ENCODE measurements at regions of chr11 and their contacts with region 1.

Region 1: DNA sequence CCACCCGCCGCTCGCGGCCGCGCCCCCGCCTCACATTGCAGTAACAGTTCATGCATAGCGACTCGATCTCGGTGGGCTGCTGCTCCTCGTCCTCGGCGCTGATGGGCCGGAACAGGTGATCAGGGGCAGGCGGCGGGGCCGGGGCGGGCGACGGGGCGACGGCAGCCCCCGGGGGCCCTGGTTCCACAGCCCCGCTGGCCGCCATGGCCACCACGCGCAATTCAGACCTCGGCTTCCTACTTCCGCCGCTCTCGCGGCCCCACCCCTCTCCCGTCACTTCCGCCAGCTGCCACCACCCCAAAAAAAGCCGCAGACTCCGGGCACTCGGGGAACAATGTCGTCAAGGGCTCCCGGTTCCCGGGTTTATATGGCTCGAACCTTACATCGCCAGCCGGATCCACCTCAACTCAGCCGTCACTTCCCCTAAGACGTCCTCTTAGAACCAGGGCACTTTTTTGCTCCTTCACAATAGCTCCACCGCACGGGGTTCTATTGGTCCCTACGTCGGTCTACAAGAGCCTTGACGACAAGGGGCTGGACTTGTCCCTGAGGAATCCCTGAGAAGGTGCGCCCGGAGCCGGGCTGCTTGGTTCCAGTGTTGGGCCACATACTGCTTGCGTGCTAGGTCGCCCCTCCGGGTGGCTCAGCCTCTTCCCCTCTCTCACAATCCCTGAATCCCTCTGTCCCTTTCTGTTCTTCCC is at the start of gene ZPR1:
- DNase-seq: peak; percentile 91 to 95
- ATAC-seq: peak; percentile 92
- H3K4me3 ChIP-seq: peak within 1 kb of the TSS; percentile 73 to 80
- H3K27ac ChIP-seq: peak within 1 kb of the TSS in 1 of 2 donors; percentile 66
- H3K4me1 ChIP-seq: peaks cover 0 to 4% of the 10 kb centered on the region in 2 donors
- H3K27me3 ChIP-seq: no peaks in the 10 kb centered on the region
- total RNA-seq, gene ZPR1: 31.5 to 48.2 TPM

Region 2: GRCh38 chr11:116750070-116750718 is 37.7 kb before region 1 on chr11:
- intact Hi-C with region 1: no loop called
- DNase-seq: no peak
- ATAC-seq: no peak
- H3K4me3 ChIP-seq: no peak overlapping the region
- H3K27ac ChIP-seq: no peak overlapping the region
- H3K4me1 ChIP-seq: no peaks in the 10 kb centered on the region
- H3K27me3 ChIP-seq: no peaks in the 10 kb centered on the region

Region 3: GRCh38 chr11:116798368-116798767 is 10.4 kb after region 1 on chr11:
- intact Hi-C with region 1: no loop called
- DNase-seq: no peak
- ATAC-seq: no peak
- H3K4me3 ChIP-seq: no peak overlapping the region
- H3K27ac ChIP-seq: no peak overlapping the region
- H3K4me1 ChIP-seq: no peaks in the 10 kb centered on the region
- H3K27me3 ChIP-seq: no peaks in the 10 kb centered on the region

Region 4: DNA sequence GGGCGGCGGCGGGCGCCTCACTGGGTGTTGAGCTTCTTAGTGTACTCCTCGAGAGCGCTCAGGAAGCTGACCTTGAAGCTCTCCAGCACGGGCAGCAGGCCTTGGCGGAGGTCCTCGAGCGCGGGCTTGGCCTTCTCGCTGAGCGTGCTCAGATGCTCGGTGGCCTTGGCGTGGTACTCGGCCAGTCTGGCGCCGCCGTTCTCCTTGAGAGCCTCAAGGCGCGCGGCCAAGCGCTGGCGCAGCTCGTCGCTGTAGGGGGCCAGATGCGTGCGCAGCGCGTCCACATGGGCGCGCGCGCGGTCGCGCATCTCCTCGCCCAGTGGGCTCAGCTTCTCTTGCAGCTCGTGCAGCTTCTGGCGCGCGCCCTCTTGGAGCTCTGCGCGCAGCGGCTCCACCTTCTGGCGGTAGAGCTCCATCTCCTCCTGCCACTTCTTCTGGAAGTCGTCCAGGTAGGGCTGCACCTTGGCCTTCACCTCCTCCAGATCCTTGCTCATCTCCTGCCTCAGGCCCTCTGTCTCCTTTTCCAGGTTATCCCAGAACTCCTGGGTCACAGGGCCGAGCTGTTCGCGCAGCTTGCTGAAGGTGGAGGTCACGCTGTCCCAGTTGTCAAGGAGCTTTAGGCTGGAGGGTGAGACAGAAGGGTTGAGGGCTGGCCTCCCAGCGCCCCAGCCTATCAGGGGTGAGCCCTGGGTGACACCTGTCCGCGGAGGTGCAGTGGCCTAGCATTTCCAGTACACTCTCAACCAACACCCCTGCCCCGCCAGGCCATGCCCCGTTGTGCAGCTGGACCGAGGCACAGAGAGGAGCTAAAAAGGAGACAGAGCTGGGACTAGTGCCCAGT is 48.1 kb after region 1 on chr11:
- intact Hi-C with region 1: loop called (anchors 2 to 5 kb)
- DNase-seq: peak; percentile 91 to 95
- ATAC-seq: peak; percentile 93
- H3K4me3 ChIP-seq: no peak overlapping the region
- H3K27ac ChIP-seq: peak overlapping the region in 1 of 2 donors; percentile 10
- H3K4me1 ChIP-seq: no peaks in the 10 kb centered on the region
- H3K27me3 ChIP-seq: no peaks in the 10 kb centered on the region

Region 5: GRCh38 chr11:117107701-117108590 is 320.0 kb after region 1 on chr11:
- intact Hi-C with region 1: loop called (anchors 5 to 10 kb)
- DNase-seq: no peak
- ATAC-seq: no peak
- H3K4me3 ChIP-seq: no peak overlapping the region
- H3K27ac ChIP-seq: no peak overlapping the region
- H3K4me1 ChIP-seq: no peaks in the 10 kb centered on the region
- H3K27me3 ChIP-seq: no peaks in the 10 kb centered on the region